ENCODE measurements at regions of chr19 and their contacts with region 1.

Region 1: DNA sequence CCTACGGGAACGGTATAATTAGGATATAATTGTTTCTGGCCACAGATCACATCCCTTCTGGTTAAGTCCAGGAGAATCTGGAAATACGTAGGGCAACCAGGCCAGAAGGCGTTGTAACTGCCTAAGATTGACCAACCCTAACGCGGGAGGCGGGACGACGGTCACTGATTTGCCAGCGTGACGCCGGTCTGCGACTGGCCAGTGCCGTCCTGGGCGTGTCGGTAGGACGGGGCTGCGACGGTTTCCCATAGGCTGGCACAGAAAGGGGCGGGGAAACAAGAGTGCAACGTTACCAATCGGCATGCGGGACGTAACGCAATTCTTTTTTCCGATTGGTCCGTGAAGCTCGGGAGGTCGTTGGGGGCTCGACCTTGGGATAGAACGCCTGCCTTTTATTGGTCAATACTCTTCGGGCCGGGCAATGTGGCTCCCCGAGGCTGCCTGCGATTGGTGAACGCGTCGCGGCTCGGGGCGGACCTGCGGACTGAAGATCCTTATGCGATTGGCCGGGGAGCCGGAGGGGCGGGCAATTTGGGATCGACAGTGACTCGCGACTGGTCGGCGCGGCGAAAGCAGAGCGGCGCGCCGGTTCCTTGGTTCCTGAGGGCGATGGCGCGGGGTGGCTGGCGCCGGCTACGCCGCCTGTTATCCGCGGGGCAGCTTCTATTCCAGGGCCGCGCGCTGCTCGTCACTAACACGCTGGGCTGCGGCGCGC is at the start of gene MPV17L2:
- DNase-seq: peak; percentile 99
- H3K4me3 Mint-ChIP-seq: peak within 1 kb of the TSS; percentile 81
- H3K27ac Mint-ChIP-seq: peak within 1 kb of the TSS; percentile 86
- H3K4me1 Mint-ChIP-seq: peaks cover 21% of the 10 kb centered on the region
- H3K27me3 Mint-ChIP-seq: no peaks in the 10 kb centered on the region
- total RNA-seq, gene MPV17L2: 18.4 and 20.9 TPM in 2 replicates

Region 2: DNA sequence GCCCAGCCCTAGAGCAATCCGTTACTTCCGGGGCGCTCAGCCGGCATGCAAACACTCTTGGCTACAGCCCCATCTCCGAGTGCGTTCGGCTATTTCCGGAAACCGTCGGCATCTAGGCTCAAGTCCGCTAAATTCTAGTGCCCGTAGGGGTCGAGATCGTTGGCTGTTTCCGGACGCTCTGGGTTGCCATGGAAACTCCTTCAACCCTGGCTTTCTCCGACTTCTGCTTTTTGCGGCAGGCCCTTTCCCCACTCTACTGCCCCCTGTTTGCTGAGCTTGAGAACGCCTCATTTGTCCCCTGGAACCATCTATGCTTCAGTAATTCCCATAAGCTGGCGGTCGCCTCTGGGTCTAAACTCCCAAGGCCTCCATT is 40.4 kb before region 1 on chr19:
- intact Hi-C with region 1: loop called (anchors 2 kb)
- DNase-seq: peak; percentile 99
- H3K4me3 Mint-ChIP-seq: peak overlapping the region; percentile 86
- H3K27ac Mint-ChIP-seq: peak overlapping the region; percentile 96
- H3K4me1 Mint-ChIP-seq: peaks cover 24% of the 10 kb centered on the region
- H3K27me3 Mint-ChIP-seq: no peaks in the 10 kb centered on the region

Region 3: GRCh38 chr19:18251587-18252369 is 58.9 kb after region 1 on chr19:
- intact Hi-C with region 1: loop called (anchors 1 kb)
- DNase-seq: peak; percentile 94
- H3K4me3 Mint-ChIP-seq: no peak overlapping the region
- H3K27ac Mint-ChIP-seq: no peak overlapping the region
- H3K4me1 Mint-ChIP-seq: peaks cover 7% of the 10 kb centered on the region
- H3K27me3 Mint-ChIP-seq: peaks cover 22% of the 10 kb centered on the region

Region 4: DNA sequence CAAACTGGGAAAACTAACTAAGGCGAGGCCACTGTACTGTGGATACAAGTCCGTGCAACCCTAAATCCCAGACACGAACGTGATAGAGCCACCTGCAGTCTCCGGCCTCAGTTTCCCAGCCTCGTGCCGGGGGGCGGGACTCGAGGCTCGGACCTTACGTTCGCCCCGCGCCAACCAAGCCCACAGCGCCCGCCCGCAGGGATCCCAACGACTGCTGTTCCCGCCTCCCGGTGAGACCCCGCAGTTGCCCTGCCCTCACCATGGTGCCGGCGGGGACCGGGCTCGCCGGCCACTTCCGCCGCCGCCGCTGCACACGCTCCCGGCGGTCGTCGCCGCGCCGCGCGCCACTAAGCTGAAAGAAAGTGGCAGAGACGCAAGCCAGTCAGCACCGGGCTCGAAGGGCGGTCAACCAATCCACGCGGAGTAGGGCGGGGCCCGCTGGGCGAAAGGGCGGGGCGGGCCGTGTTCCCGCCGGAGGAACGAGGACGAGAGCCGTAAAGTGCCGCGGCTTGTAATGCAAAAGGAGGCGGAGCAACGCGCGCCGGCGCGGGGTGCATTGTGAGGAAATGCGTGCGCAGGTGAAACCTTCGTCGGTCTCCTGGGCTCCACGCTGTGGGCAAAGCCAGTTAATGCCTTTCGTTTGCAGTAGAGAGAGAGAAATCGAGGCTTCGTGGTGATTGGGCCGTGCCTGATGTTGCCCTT is 130.1 kb after region 1 on chr19 and contains the start of gene LSM4:
- intact Hi-C with region 1: loop called (anchors 2 kb)
- DNase-seq: peak; percentile 100
- H3K4me3 Mint-ChIP-seq: peak within 1 kb of the TSS; percentile 96
- H3K27ac Mint-ChIP-seq: peak within 1 kb of the TSS; percentile 95
- H3K4me1 Mint-ChIP-seq: peaks cover 48% of the 10 kb centered on the region
- H3K27me3 Mint-ChIP-seq: no peaks in the 10 kb centered on the region
- total RNA-seq, gene LSM4: 217 and 225 TPM in 2 replicates

Region 5: DNA sequence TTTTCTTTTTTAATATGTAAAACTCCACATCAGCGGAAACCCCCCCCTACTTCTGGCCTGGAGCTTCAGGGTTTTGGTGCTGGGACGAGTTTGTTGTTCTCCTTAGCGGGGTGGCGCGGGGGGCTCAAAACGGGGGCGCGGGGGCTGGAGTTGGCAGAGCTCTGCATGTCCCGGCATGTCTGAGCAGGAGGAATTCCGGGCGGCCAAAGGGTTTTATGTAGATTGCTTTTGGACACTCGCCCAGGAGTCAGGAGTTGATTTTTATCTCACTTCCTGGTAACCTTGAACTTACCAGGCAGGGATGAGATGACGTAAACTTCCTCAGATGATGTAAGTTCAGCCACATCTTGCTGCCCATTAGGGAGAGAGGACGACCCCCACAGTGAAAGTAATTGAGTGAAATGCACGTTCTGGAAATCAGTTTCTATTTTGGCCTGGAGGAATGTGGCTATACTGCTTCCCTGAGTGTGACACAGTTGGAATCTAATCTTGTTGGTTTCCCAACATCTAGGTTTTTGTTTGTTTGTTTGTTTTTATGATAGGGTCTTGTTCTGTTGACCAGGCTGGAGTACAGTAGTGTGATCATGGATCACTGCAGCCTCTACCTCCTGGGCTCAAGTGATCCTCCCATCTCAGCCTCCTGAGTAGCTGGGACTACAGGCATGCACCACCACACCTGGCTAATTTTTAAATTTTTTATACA is 172.1 kb after region 1 on chr19:
- intact Hi-C with region 1: no loop called
- DNase-seq: no peak
- H3K4me3 Mint-ChIP-seq: no peak overlapping the region
- H3K27ac Mint-ChIP-seq: no peak overlapping the region
- H3K4me1 Mint-ChIP-seq: no peaks in the 10 kb centered on the region
- H3K27me3 Mint-ChIP-seq: no peaks in the 10 kb centered on the region

Region 6: DNA sequence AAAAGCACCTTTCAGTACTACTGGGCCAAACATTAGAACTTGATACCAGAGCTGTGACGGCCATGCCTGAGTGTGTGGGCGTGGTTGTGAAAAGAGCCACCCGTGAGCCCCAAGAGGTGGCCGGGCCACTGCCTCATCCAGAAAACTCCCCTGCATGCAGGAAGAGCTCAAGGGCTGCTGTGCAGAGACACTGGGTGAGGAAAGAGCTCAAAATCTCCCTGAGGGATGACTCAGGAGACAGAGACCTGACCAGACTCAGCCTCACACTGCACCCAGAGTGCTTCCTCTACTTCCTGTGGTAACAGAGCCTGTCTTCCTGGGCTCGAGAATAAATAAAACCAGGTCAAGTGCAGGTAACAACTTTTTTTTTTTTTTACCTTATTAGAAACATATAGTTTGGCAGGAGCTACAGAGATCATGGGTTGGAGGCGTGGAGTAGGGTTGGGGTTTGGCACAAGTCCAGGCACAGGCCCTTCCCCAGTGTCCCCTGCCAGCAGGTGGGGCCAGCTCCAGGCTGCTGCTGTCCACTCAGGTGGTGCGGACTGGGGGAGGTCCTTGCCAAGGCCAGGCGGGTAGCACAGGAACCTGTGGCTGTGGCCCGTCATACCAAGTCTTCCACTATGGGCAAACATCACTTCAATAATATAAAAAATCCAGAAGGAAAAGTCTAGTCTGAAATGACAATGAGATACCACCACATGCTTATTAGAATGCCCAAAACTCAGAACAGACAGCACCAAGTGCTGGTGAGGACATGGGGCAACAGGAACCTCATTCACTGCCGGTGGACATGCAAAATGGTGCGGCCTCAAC is 303.5 kb after region 1 on chr19:
- intact Hi-C with region 1: no loop called
- DNase-seq: peak; percentile 85
- H3K4me3 Mint-ChIP-seq: peak overlapping the region; percentile 66
- H3K27ac Mint-ChIP-seq: peak overlapping the region; percentile 89
- H3K4me1 Mint-ChIP-seq: peaks cover 60% of the 10 kb centered on the region
- H3K27me3 Mint-ChIP-seq: no peaks in the 10 kb centered on the region